GM13977 (cell line): ENCODE measurements at regions of chr5 and their contacts with region 1.

Region 1: DNA sequence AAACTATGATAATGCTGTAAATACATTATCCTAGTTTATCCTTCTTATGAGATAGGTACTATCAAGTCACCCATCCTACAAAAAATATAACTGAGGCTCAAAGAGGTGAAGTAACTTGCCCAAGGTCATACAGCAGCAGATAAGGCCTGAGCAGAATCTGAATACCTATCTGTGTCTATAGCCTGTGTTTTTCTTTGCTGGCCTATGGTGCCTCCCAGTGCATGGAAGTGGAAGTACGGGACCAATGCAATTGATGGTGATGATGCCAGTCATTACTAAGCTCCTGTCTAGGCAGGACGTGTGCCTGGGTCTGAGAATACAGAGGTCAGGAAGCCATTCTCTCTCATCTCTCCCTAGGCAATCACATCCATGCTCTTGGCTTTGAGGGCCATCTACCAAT is 67.8 kb downstream of the FAT2 start:
- DNase-seq: peak; percentile 75
- CTCF ChIP-seq: peak; percentile 70

Region 2: DNA sequence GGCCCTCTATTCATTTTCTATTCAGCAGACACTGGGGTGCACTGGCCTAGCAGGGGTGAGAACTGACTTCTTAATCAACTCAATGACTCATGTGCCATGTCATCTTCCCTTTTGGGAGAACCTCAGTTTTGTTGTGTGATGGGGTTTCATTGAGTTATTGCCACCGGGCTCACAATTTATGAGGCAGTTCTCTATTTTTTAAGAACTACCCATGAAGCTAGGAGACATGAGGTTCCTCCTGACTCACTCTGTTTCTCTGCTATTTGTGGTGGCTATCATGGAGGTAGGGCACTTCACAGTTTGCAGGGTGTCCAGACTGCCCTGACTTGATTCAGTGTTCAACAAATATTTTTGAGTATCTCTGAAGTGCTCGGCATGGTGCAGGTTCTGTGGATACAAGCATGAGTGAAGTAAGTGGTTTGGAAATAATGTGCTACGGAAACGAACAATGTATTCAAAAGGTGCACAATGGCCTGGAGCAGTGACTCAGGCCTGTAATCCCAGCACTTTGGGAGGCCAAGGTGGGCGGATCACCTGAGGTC is 124.1 kb after region 1 on chr5:
- in situ Hi-C with region 1: loop called (anchors 10 kb)
- DNase-seq: no peak
- CTCF ChIP-seq: no peak